Left cardiac atrium (tissue), 4 donors: ENCODE measurements at regions of chr2 and their contacts with region 1.

Region 1: DNA sequence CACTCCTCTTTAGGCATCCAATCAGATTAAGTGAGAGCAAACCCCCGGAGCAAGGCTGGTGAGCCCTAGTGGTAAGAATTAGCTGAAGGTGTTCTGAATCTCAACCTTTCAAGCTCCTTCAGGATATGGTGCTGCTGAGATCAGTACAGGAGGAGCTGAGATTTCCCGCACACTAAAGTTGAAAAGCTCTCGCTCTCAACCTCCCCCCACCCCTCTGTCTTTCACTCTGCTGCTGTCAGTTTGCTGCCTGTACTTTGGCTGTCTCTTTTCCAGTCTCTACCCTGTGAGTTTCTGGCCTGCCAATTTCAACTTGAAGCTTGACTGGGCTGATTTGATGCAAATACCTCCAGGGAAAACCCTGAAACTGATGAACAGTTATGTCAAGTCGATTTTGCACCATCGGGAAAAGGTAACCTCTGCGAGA is 15.7 kb downstream of the ZEB2 start:
- DNase-seq: no peak
- ATAC-seq: peak; percentile 25 to 34

Region 2: DNA sequence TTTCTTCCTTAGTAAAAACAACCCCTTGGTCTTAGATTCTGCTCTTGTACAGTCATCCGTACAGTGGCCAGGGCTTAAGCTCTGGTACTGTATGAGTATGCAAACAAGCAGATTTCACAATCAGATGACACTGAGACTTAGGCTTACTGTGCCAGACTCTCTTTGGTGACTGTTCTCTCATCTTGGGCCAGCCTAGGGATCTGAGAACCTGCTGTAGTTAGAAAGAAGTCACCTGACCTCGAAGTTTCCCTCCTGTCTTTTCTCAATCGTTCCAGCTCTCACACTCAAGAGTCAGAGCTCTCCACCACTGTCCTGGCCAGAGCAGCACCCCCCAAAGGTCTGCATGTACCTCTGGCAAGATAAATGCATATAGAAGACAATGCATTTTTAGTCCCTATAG is 47.5 kb before region 1 on chr2:
- intact Hi-C with region 1: loop called in 1 of 2 experiments (anchors 5 kb)
- DNase-seq: peak; percentile 36
- ATAC-seq: peak; percentile 56 to 77